HAP-1 (cell line): ENCODE measurements at regions of chr9 and their contacts with region 1.

Region 1: DNA sequence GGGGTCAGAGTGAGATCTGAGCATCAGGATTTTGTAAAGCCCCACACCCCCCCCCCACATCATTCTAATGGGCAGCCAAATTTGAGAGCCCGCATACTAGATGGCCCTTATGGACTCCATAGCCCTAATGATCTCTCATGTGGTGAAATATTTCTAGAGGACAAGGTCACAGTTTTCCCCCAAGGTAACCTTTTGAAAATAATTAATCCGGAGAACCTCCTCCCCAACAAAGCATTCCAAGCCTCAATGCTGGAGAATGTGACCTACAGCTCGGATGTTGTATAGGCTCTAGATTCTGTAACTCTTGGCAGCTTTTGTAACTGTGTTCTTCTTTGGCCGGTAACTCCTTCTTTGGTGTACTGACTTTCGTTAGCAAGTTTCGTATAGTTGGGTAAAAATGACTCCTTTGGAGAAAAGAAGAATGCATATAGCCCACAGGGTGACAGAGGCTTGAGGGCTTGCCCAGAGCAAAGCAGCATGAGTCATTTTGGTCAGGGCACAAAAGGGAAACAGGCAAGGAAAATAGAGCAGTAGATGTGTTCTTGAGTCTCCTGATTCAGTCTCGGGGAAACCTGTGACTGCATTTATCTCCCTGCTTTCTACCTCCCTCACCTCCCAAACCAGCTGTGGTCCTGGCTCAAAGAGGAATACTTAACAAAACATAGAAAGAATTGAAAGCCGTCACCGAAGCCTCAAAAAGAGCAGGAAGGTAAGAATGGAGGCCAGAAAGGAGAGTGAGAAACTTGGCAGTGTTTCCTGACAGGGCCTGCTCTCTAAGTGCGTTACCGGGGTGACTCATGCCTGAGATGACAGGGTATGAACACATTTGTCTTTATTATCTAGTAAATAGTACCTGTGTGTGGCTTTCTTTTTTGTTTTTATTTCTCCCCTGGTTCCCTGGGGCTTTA is 6.6 kb upstream of the XPA start:
- DNase-seq: no peak
- H3K4me3 ChIP-seq: no peak overlapping the region
- H3K4me1 ChIP-seq: no peaks in the 10 kb centered on the region
- H3K27me3 ChIP-seq: peaks cover 14% of the 10 kb centered on the region

Region 2: GRCh38 chr9:97628668-97629067 is 75.0 kb before region 1 on chr9:
- in situ Hi-C with region 1: no loop called
- DNase-seq: no peak
- H3K4me3 ChIP-seq: no peak overlapping the region
- H3K4me1 ChIP-seq: peaks cover 8% of the 10 kb centered on the region
- H3K27me3 ChIP-seq: no peaks in the 10 kb centered on the region

Region 3: GRCh38 chr9:97640325-97640724 is 63.4 kb before region 1 on chr9:
- in situ Hi-C with region 1: no loop called
- DNase-seq: peak in 1 of 2 experiments; percentile 21
- H3K4me3 ChIP-seq: no peak overlapping the region
- H3K4me1 ChIP-seq: peaks cover 18% of the 10 kb centered on the region
- H3K27me3 ChIP-seq: no peaks in the 10 kb centered on the region

Region 4: GRCh38 chr9:97900738-97901565 is 197.3 kb after region 1 on chr9:
- in situ Hi-C with region 1: loop called (anchors 10 kb)
- DNase-seq: peak; percentile 29 to 40
- H3K4me3 ChIP-seq: no peak overlapping the region
- H3K4me1 ChIP-seq: no peaks in the 10 kb centered on the region
- H3K27me3 ChIP-seq: no peaks in the 10 kb centered on the region